ENCODE measurements at regions of chr20 and their contacts with region 1.

Region 1: GRCh38 chr20:36070451-36070850 is 84.1 kb upstream of the EPB41L1 start:
- DNase-seq: no peak
- ATAC-seq: no peak
- H3K4me3 ChIP-seq: no peak overlapping the region
- H3K4me3 Mint-ChIP-seq: no peak overlapping the region
- H3K27ac ChIP-seq: no peak overlapping the region
- H3K27ac Mint-ChIP-seq: no peak overlapping the region
- H3K4me1 ChIP-seq: peaks cover 3% of the 10 kb centered on the region
- H3K4me1 Mint-ChIP-seq: no peaks in the 10 kb centered on the region
- H3K27me3 ChIP-seq: peaks cover 0 to 4% of the 10 kb centered on the region in 2 experiments
- H3K27me3 Mint-ChIP-seq: peaks cover 5% of the 10 kb centered on the region
- CTCF ChIP-seq: no peak

Region 2: GRCh38 chr20:36132802-36133211 is 62.4 kb after region 1 on chr20:
- CTCF ChIA-PET with region 1: interaction called, 5 read pairs
- POLR2A ChIA-PET with region 1: no interaction called
- intact Hi-C with region 1: loop called in 1 of 2 experiments (anchors 5 kb)
- DNase-seq: no peak
- ATAC-seq: no peak
- H3K4me3 ChIP-seq: no peak overlapping the region
- H3K4me3 Mint-ChIP-seq: no peak overlapping the region
- H3K27ac ChIP-seq: no peak overlapping the region
- H3K27ac Mint-ChIP-seq: no peak overlapping the region
- H3K4me1 ChIP-seq: no peaks in the 10 kb centered on the region
- H3K4me1 Mint-ChIP-seq: no peaks in the 10 kb centered on the region
- H3K27me3 ChIP-seq: no peaks in the 10 kb centered on the region
- H3K27me3 Mint-ChIP-seq: no peaks in the 10 kb centered on the region
- CTCF ChIP-seq: no peak

Region 3: GRCh38 chr20:36183155-36183944 is 112.9 kb after region 1 on chr20:
- CTCF ChIA-PET with region 1: no interaction called
- POLR2A ChIA-PET with region 1: no interaction called
- intact Hi-C with region 1: no loop called
- DNase-seq: no peak
- ATAC-seq: no peak
- H3K4me3 ChIP-seq: no peak overlapping the region
- H3K4me3 Mint-ChIP-seq: no peak overlapping the region
- H3K27ac ChIP-seq: no peak overlapping the region
- H3K27ac Mint-ChIP-seq: no peak overlapping the region
- H3K4me1 ChIP-seq: no peaks in the 10 kb centered on the region
- H3K4me1 Mint-ChIP-seq: no peaks in the 10 kb centered on the region
- H3K27me3 ChIP-seq: no peaks in the 10 kb centered on the region
- H3K27me3 Mint-ChIP-seq: no peaks in the 10 kb centered on the region
- CTCF ChIP-seq: no peak

Measured in CD4-positive, alpha-beta T cell (primary cell).